ENCODE measurements at regions of chr3 and their contacts with region 1.

Region 1: GRCh38 chr3:171622126-171622525 is 161.9 kb upstream of the TNIK start:
- DNase-seq: no peak
- ATAC-seq: no peak
- H3K4me3 ChIP-seq: no peak overlapping the region
- H3K27ac ChIP-seq: no peak overlapping the region
- H3K4me1 ChIP-seq: peaks cover 8% of the 10 kb centered on the region; the same call in 1 of the 2 replicates
- H3K27me3 ChIP-seq: no peaks in the 10 kb centered on the region
- CTCF ChIP-seq: no peak

Region 2: GRCh38 chr3:171676601-171677175 is 54.6 kb after region 1 on chr3:
- CTCF ChIA-PET with region 1: interaction called, 11 read pairs
- POLR2A ChIA-PET with region 1: no interaction called
- in situ Hi-C with region 1: no loop called
- intact Hi-C with region 1: no loop called
- DNase-seq: no peak
- ATAC-seq: no peak
- H3K4me3 ChIP-seq: no peak overlapping the region
- H3K27ac ChIP-seq: no peak overlapping the region
- H3K4me1 ChIP-seq: no peaks in the 10 kb centered on the region
- H3K27me3 ChIP-seq: no peaks in the 10 kb centered on the region
- CTCF ChIP-seq: no peak

Measured in Panc1 (cell line).